ENCODE measurements at regions of chr17 and their contacts with region 1.

Region 1: DNA sequence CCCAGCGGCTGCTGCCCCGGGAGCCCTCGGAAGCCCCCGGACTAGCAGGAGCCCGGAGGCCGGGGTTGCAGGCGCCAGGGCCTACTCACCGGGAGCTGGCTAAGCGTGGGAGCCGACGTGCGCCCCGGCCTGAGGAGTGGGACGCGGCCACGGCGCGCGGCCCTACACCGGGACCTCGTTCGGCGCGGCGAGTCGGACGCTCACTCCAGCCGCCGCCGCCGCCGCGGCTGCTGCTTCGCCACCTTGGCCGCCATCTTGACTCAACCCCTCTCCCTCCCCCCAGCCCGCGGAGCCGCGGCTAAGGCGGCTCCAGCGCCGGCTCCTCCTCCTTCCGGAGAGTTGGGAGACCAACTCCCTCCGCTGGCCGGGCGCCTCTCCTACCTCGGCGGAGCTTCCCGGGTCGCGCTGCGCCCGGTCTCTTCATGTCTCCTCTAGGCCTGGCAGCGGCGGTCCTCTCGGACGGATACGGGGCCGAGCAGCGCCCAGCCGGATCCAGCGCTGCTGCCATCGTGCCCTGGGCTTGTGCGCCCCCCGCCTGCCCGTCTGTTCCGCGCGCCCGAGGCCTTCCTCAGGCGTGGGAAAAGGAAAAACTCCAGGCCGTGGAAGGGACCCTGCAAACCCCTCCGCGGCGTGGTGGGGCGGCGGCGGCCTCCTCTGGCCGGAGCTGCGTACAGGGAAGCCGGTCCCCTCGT is at the start of gene NCOR1:
- DNase-seq: peak; percentile 90
- H3K4me3 ChIP-seq: peak within 1 kb of the TSS; percentile 78 to 98 (median 96)
- H3K27ac ChIP-seq: peak within 1 kb of the TSS; percentile 84
- H3K4me1 ChIP-seq: peaks cover 22% of the 10 kb centered on the region
- H3K27me3 ChIP-seq: no peaks in the 10 kb centered on the region
- CTCF ChIP-seq: peak; percentile 14 to 40
- POLR2A ChIP-seq: peak; percentile 92
- total RNA-seq, gene NCOR1: 134 and 140 TPM in 2 replicates

Region 2: GRCh38 chr17:15278924-15279477 is 936.4 kb before region 1 on chr17:
- CTCF ChIA-PET with region 1: no interaction called
- POLR2A ChIA-PET with region 1: no interaction called
- dilution Hi-C with region 1: no loop called
- intact Hi-C with region 1: no loop called
- DNase-seq: peak; percentile 19
- H3K4me3 ChIP-seq: no peak overlapping the region
- H3K27ac ChIP-seq: no peak overlapping the region
- H3K4me1 ChIP-seq: no peaks in the 10 kb centered on the region
- H3K27me3 ChIP-seq: peaks cover 0 to 3% of the 10 kb centered on the region in 2 experiments
- CTCF ChIP-seq: no peak
- POLR2A ChIP-seq: no peak

Region 3: GRCh38 chr17:16150251-16150856 is 65.1 kb before region 1 on chr17:
- CTCF ChIA-PET with region 1: interaction called, 3 read pairs
- POLR2A ChIA-PET with region 1: interaction called, 4 read pairs
- dilution Hi-C with region 1: no loop called
- intact Hi-C with region 1: loop called (anchors 2 kb)
- DNase-seq: peak; percentile 80
- H3K4me3 ChIP-seq: no peak overlapping the region
- H3K27ac ChIP-seq: peak overlapping the region; percentile 67
- H3K4me1 ChIP-seq: peaks cover 14% of the 10 kb centered on the region
- H3K27me3 ChIP-seq: no peaks in the 10 kb centered on the region
- CTCF ChIP-seq: no peak
- POLR2A ChIP-seq: no peak

Region 4: DNA sequence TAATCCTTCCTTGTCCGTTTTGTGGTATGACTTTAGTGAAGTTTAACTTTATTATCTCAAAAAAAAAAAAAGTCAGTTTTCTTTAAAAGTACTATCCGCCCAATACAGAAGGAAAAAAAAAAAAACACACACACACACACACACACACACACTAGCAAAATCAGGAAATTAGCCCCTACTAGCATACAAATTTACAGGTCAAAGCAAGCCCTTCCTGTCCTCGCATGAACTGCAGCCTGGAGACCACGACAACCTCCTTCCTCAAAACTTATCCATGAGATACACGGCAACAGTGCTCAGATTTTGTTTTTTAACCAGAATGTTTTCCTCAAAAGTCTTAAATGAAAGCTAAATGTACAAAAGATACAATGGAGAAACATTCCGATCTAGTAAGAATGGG is 16.3 kb before region 1 on chr17:
- CTCF ChIA-PET with region 1: interaction called, 6 read pairs
- POLR2A ChIA-PET with region 1: interaction called, 3 read pairs
- dilution Hi-C with region 1: no loop called
- intact Hi-C with region 1: loop called (anchors 2 kb)
- DNase-seq: peak; percentile 71
- H3K4me3 ChIP-seq: no peak overlapping the region
- H3K27ac ChIP-seq: peak overlapping the region; percentile 37
- H3K4me1 ChIP-seq: peaks cover 17% of the 10 kb centered on the region
- H3K27me3 ChIP-seq: no peaks in the 10 kb centered on the region
- CTCF ChIP-seq: no peak
- POLR2A ChIP-seq: no peak

Region 5: DNA sequence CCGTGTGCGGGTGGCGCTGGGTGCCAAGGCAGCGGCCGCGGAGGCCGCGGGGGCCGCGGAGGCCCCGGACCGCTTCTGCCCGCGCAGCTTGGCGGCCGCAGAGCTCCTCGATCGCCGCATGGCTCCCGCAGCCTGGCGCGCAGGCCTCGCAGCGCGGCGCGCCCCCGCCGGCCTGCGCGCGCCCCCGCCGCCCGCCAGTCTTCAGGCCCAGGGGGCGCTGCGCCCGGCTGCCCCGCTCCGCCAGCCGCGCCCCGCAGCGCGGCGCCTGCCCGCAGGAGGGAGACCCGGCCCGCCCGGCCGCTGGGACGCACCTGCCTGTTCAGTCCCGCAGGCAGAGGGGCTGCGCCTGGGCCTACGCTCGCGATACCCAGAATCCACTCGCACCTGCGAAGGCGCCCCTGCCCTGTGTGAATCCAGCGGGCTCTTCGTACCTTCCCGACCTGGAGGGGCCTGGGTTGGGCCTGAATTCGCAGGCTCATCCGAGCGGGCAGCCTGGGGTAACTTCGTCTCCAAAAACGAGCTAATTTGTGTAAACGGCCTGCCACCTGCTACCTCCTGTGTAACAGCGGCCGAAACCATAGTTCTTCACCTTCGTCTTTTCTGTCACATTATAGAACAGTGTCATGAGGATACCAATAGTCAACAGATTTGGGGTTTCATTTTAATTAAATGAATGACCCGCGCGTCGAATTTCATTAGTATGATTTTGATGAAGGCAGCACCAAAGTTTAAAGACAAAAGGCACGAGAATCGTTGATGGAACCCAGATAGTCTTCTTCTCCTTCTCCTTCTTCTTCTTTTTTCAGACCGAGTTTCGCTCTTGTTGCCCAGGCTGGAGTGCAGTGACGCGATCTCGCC is 138.1 kb after region 1 on chr17 and contains the start of gene CENPV:
- CTCF ChIA-PET with region 1: interaction called, 8 read pairs
- POLR2A ChIA-PET with region 1: no interaction called
- dilution Hi-C with region 1: no loop called
- intact Hi-C with region 1: loop called (anchors 2 kb)
- DNase-seq: peak; percentile 47
- H3K4me3 ChIP-seq: peak within 1 kb of the TSS; percentile 48 to 60 (median 49)
- H3K27ac ChIP-seq: peak within 1 kb of the TSS; percentile 2
- H3K4me1 ChIP-seq: peaks cover 10% of the 10 kb centered on the region
- H3K27me3 ChIP-seq: no peaks in the 10 kb centered on the region
- CTCF ChIP-seq: peak in 1 of 2 donors; percentile 9
- POLR2A ChIP-seq: no peak
- total RNA-seq, gene CENPV: 41.6 and 44.0 TPM in 2 replicates